ENCODE measurements at regions of chr10 and their contacts with region 1.

Region 1: DNA sequence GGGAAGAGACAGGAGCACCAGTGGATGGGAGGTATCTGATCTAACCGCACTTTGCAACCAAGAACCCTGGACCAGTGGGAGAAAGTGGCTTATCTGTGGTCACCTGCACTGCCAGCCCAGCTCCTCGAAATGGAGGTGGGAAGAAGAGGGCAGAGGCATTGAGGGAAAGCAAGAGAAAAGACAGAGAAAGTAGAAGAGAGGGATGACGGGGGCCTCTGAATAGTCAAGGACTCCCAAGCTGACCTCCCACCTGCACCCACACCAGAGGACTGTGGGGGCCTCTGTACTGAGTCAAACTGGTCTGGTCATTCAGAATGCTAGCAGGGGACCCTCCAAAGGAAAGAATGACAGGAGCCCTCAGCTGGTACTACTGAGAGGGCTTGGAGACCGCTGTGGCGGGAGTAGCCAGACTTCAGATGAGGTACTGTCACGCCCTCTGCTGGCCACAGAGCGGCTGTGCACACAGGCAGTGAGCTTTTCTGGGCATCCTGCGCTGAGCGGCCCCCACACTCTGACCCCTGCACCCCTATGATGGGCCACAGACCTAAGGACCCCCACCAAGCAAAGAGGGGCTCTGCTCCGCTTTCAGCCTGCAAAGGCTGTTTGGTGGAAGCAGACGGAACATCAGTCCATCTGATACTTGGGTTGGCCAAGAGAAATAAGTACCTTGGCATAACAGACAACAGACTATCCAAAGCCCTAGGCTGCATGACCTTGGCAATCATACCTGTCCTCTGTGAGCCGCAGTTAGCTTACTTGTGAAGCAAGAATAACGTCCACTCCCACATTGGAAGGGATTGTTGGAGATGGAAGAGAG is 112.9 kb downstream of the COL13A1 start:
- DNase-seq: peak; percentile 41 to 62
- ATAC-seq: peak; percentile 52 to 73
- H3K4me3 ChIP-seq: no peak overlapping the region
- H3K27ac ChIP-seq: no peak overlapping the region
- H3K4me1 ChIP-seq: peaks cover 19 to 23% of the 10 kb centered on the region in 2 donors
- H3K27me3 ChIP-seq: no peaks in the 10 kb centered on the region
- CTCF ChIP-seq: peak; percentile 90 to 96 (median 95)
- POLR2A ChIP-seq: no peak

Region 2: GRCh38 chr10:69800109-69800508 is 114.5 kb before region 1 on chr10:
- in situ Hi-C with region 1: no loop called
- intact Hi-C with region 1: loop called (anchors 1 kb)
- DNase-seq: no peak
- ATAC-seq: peak; percentile 17 to 28
- H3K4me3 ChIP-seq: no peak overlapping the region
- H3K27ac ChIP-seq: no peak overlapping the region
- H3K4me1 ChIP-seq: peaks cover 10 to 12% of the 10 kb centered on the region in 2 donors
- H3K27me3 ChIP-seq: no peaks in the 10 kb centered on the region
- CTCF ChIP-seq: peak; percentile 21 to 69 (median 43)
- POLR2A ChIP-seq: no peak

Region 3: GRCh38 chr10:69866688-69867461 is 47.7 kb before region 1 on chr10:
- in situ Hi-C with region 1: no loop called
- intact Hi-C with region 1: loop called (anchors 5 kb)
- DNase-seq: no peak
- ATAC-seq: no peak
- H3K4me3 ChIP-seq: no peak overlapping the region
- H3K27ac ChIP-seq: no peak overlapping the region
- H3K4me1 ChIP-seq: no peaks in the 10 kb centered on the region
- H3K27me3 ChIP-seq: no peaks in the 10 kb centered on the region
- CTCF ChIP-seq: no peak
- POLR2A ChIP-seq: no peak

Region 4: DNA sequence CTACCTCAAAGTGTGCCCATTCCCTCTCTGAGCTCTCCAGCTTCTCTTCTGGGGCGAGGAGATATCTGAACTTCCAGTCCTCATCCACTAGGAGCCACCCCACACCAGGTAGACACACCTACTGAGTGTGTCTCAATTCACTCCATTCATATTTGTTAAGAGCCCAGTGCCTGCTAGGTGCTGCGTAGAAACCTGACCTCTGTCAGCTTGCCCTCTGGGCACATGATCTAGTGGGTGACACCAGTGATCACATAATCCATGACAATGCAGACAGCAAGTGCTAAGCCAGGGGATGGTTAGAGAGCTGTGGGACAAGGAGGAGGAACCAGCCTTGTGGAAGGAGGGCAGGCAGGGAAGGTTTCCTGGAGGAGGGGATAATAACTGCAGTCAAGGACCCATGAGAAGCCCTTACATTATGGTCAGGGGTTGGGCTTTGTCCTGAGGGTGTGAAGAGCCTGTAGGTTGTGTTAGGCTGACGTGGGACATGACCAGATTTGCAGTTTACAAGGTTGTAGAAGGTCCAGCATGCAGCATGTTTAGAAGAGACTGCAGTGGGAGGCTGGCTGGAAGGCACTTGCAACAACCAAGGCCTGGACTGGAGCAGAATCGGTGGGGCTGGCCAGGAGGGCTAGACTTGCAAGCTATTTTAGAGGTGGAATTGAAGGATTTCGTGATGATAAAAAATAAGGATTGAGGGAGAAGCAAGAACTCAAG is 31.1 kb before region 1 on chr10:
- in situ Hi-C with region 1: no loop called
- intact Hi-C with region 1: loop called (anchors 1 kb)
- DNase-seq: peak; percentile 45 to 66
- ATAC-seq: peak; percentile 88 to 91
- H3K4me3 ChIP-seq: no peak overlapping the region
- H3K27ac ChIP-seq: peak overlapping the region in 1 of 4 donors; percentile 15
- H3K4me1 ChIP-seq: no peaks in the 10 kb centered on the region
- H3K27me3 ChIP-seq: no peaks in the 10 kb centered on the region
- CTCF ChIP-seq: peak in 4 of 5 experiments; percentile 45 to 66 (median 49)
- POLR2A ChIP-seq: no peak

Measured in gastrocnemius medialis (tissue), 4 donors.